RWPE1 (cell line): ENCODE measurements at regions of chr16 and their contacts with region 1.

Region 1: DNA sequence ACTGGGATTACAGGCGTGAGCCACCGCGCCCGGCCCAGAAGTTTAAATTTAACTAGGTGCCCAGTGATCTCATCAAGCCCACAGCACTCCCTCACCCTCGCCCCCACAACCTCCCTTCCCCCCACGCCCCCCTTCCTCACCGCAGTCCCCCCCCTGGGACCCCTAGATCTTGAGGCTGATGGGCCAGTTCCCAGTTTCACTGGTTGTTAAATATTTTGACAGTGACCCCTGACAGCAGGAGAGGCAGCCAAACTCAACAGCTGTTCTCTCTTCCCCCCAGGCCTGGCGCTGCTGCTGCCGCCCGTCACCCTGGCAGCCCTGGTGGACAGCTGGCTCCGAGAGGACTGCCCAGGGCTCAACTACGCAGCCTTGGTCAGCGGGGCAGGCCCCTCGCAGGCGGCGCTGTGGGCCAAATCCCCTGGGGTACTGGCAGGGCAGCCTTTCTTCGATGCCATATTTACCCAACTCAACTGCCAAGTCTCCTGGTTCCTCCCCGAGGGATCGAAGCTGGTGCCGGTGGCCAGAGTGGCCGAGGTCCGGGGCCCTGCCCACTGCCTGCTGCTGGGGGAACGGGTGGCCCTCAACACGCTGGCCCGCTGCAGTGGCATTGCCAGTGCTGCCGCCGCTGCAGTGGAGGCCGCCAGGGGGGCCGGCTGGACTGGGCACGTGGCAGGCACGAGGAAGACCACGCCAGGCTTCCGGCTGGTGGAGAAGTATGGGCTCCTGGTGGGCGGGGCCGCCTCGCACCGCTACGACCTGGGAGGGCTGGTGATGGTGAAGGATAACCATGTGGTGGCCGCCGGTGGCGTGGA is 15.6 kb downstream of the QPRT start:
- DNase-seq: no peak
- H3K27ac ChIP-seq: no peak overlapping the region
- CTCF ChIP-seq: no peak

Region 2: GRCh38 chr16:29674188-29674587 is 20.4 kb before region 1 on chr16:
- CTCF ChIA-PET with region 1: no interaction called
- POLR2A ChIA-PET with region 1: no interaction called
- DNase-seq: no peak
- H3K27ac ChIP-seq: no peak overlapping the region
- CTCF ChIP-seq: no peak

Region 3: DNA sequence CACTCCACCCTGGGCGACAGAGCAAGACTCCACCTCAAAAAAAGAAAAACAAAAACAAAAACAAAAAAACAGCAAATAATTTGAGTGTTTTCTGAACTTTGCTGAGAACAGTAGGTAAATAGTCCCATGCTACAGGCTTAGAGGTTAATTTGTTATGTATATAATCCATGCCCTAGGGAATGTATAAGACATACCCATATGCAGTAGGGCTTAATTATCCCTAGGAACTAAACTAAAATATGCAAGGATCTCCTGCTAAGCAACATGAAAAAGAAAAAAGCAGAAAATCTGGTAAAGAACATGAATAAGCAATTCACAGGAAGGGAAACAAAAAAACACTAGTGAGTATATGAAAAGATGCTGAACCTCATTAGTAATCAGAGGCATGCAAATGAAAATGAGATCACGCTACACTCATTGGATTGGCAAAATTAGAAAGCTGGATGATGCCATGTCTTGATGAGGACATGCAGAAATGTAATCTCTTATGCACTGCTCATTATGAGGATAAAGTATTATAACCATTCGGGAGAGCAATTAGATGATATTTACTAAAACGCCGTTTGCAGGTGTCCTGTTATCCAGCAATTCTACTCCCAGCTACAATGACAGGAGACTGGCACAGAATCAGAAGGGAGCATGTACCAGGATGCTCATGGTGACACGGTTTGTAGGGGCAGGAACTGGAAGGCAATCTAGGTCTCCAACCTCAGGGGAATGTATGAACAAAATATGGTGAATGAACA is 225.9 kb after region 1 on chr16:
- CTCF ChIA-PET with region 1: no interaction called
- POLR2A ChIA-PET with region 1: no interaction called
- DNase-seq: no peak
- H3K27ac ChIP-seq: no peak overlapping the region
- CTCF ChIP-seq: no peak

Region 4: DNA sequence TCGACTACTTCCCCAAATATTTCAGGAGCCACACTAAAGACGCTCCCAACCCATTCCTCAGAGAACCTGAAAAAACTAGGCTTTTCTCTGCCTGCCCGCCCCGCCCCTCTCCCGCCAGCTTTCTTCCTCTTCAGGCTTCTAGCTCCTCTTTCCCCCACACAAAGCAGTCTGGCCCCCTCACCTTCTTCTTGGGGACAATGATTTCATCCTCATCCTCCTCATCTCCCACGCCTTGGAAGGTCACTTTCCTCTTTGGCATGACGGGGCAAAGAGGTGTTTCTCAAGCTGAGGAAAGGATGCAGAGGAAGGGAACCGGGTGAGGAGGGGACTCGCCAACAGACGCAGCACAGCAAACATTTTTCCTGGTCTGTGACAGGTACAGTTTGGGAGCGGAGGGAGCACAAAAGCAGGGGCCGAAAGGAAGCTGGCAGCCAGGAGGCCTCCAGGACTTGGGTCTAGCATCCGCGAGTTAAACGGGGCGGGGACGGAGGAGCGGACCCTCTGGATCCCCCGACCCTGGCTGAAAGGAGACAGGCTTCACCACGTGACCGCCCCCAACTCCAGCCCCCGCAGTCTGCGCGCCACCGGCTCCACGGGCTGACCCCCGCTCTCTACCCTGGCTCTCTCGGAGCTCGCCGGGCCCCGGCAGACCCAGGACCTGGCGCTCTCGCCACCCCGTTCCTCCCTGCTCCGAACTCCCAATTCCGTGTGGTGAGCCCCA is 660.0 kb after region 1 on chr16:
- CTCF ChIA-PET with region 1: no interaction called
- POLR2A ChIA-PET with region 1: interaction called, 10 read pairs
- DNase-seq: no peak
- H3K27ac ChIP-seq: peak overlapping the region; percentile 95
- CTCF ChIP-seq: no peak